ENCODE measurements at regions of chrX and their contacts with region 1.

Region 1: DNA sequence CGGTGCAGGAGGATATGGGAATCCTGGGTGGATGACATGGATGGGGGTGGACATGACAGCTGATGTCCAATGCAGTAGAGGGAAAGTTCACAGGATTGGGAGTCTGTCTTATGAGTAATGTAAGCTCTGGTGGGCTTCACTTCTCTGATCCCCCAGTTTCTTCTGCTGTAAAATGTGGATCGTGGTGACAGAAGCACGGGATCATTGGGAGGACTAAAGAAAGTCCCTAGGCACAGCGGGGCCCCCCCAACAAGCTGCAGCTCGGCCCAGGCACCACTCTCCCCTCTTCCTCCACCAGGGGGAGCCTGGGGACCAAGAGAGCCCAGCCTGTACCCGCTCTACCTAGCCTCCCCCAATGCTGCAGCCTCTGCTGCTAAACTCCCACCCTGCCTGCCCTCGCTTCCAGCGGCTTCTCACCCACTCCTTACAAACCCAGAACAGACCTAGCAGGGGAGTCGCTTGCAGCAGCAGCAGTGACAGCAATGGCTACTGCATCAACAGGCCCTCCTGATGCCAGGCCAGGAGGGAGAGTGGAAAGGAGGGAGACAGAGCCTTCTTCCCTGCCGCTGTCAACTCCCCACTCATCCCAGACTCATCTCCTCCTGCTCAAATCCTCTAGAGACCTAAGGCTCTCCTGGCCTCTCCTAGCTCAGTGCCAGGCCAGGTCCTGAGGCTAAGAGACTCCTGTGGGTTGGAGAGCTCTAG is 36.1 kb upstream of the IQSEC2 start:
- DNase-seq: peak; percentile 50 to 75 (median 72)
- ATAC-seq: peak; percentile 79 to 82 (median 79)
- H3K4me3 ChIP-seq: no peak overlapping the region
- H3K27ac ChIP-seq: no peak overlapping the region
- H3K4me1 ChIP-seq: peaks cover 0 to 4% (median 0%) of the 10 kb centered on the region in 4 donors
- H3K27me3 ChIP-seq: peaks cover 0 to 6% of the 10 kb centered on the region in 2 donors
- CTCF ChIP-seq: peak; percentile 64 to 87 (median 86)
- POLR2A ChIP-seq: no peak

Region 2: DNA sequence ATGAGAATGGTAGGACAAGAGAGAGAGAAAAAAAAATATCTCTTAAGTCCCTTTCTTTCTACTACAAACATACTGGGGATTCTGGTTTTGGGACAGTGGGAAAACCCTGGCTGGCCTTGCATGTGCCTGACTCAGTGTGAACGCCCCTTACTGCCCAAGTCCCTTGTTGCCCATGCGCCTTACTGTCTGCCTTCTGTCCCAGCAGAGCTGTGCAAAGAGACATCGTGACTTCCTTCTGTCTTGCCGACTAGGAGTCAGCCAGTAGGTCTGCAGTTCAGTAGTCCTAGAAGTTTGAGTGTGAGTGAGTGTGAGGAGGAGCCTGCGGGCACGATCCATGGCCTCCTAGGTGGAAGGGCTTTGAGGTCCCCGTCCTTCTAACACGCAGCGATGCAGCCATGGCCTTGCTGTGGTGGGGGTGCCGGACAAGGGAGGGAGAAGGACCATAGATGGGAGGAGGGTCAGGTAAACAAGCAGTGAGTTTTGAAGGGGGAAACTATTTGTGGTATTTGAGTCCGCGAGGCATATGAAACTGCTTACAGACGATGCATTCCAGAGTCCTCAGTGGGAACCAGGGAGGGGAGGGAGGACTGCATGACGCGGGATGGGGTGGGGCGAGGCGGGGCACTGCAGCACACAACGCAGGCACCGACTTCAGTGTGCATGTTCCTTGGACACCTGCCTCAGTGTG is 949.0 kb before region 1 on chrX and contains the start of gene XAGE2:
- intact Hi-C with region 1: no loop called
- DNase-seq: no peak
- ATAC-seq: no peak
- H3K4me3 ChIP-seq: no peak within 1 kb of the TSS
- H3K27ac ChIP-seq: no peak within 1 kb of the TSS
- H3K4me1 ChIP-seq: no peaks in the 10 kb centered on the region
- H3K27me3 ChIP-seq: no peaks in the 10 kb centered on the region
- CTCF ChIP-seq: no peak
- POLR2A ChIP-seq: no peak
- total RNA-seq, gene XAGE2: not detected

Region 3: GRCh38 chrX:53433651-53434639 is 116.4 kb after region 1 on chrX and contains the start of gene HSD17B10:
- intact Hi-C with region 1: loop called (anchors 10 kb)
- DNase-seq: peak; percentile 92 to 96 (median 95)
- ATAC-seq: peak; percentile 95 to 97 (median 96)
- H3K4me3 ChIP-seq: peak within 1 kb of the TSS; percentile 48 to 71 (median 55)
- H3K27ac ChIP-seq: peak within 1 kb of the TSS in 2 of 3 donors; percentile 8 to 47
- H3K4me1 ChIP-seq: peaks cover 0 to 12% (median 5%) of the 10 kb centered on the region in 4 donors
- H3K27me3 ChIP-seq: peaks cover 0 to 3% of the 10 kb centered on the region in 2 donors
- CTCF ChIP-seq: no peak
- POLR2A ChIP-seq: peak; percentile 67
- total RNA-seq, gene HSD17B10: 123 to 213 (median 137) TPM